Activated CD8-positive, alpha-beta T cell treated with anti-CD3 and anti-CD28 coated beads, Interleukin-2, amount 10 ng/mL, durations not matched to agents 7 days and 5 days (primary cell): ENCODE measurements at regions of chr19 and their contacts with region 1.

Region 1: DNA sequence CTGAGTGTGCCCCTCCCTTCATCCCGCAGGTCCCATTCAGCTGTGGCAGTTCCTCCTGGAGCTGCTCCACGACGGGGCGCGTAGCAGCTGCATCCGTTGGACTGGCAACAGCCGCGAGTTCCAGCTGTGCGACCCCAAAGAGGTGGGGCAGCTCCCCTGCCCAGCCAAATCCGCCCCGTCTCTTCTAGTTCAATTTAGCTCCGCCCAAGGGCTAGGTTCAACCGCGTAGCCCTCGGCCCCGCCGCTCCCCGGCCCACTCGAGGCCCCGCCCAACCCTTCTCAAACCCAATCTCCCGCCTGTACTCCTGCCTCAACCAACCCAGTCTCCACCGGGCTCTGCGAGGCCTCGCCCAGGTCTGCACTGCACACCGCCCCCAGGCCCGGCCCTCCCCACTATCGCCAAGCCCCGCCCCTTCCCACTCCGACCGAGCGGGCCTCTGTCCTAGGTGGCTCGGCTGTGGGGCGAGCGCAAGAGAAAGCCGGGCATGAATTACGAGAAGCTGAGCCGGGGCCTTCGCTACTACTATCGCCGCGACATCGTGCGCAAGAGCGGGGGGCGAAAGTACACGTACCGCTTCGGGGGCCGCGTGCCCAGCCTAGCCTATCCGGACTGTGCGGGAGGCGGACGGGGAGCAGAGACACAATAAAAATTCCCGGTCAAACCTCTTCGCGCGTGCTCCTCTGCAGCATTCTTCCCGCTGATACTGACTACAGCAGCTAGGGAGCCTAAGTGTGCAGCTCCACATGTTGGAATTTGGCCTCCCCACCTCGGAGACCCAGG is 2.9 kb downstream of the ETV2 start:
- DNase-seq: peak; percentile 99
- ATAC-seq: peak; percentile 86
- H3K4me3 Mint-ChIP-seq: peak overlapping the region; percentile 78
- H3K27ac Mint-ChIP-seq: peak overlapping the region; percentile 90
- H3K4me1 Mint-ChIP-seq: peaks cover 50% of the 10 kb centered on the region
- H3K27me3 Mint-ChIP-seq: no peaks in the 10 kb centered on the region

Region 2: DNA sequence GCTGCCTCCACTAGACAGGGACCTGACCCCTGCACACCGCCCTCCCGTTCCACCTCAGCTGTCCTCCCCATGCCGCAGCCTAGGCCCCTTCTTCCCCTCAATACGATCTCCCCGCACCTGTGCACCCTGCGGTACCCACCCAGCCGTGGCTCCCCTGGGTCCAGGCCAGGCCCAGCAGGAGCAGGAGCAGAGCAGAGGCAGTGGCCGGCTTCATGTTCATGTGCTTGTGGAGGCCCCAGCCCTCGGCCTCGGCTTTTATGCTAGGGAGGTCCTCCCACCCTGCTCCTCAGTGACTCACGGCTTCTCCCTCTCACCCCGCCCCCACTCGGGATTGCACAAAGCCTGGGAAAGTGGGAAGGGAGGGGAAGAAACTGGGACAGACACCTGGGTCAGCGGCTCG is 142.7 kb before region 1 on chr19:
- CTCF ChIA-PET with region 1: no interaction called
- POLR2A ChIA-PET with region 1: no interaction called
- DNase-seq: no peak
- ATAC-seq: no peak
- H3K4me3 Mint-ChIP-seq: no peak overlapping the region
- H3K27ac Mint-ChIP-seq: no peak overlapping the region
- H3K4me1 Mint-ChIP-seq: no peaks in the 10 kb centered on the region
- H3K27me3 Mint-ChIP-seq: peaks cover 12% of the 10 kb centered on the region

Region 3: DNA sequence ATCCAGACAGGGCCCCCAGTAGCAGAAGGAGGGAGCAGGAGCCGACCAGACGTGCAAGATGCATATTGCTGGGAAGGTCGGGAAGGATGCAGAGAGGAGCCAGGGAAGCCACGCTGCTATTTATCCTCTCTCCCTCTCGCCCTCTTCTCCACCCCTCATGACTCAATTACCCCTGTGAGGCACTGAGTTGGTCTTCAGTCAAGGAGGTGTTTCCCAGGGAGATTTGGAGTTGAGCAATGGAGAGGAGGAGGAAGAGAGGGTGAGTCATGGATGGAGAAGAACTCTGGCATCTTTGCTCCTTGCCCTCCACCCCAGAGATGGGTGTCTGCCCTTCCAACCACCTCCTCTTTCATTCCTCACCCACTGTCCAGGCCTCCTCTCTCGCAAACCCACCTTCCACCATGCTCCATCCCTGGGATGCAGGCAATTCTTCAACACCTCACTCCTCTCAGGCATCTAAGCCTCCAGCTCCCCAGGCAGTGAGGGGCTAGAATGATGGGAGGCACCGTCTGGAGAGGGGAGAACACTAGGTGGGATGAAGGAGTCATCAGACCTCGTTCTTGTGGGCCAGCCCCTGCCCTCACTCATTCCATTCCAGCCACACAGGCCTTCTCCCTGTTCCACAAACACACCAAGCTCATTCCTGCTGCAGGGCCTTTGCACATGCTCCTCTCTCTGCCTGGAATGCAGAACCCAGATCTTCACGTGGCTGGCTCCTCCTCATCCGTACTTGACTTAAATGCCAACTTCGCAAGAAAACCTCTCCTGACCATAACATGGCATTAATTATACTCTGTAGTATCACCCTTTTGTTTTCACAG is 116.0 kb before region 1 on chr19 and contains the start of gene SBSN:
- CTCF ChIA-PET with region 1: no interaction called
- POLR2A ChIA-PET with region 1: no interaction called
- DNase-seq: no peak
- ATAC-seq: no peak
- H3K4me3 Mint-ChIP-seq: no peak within 1 kb of the TSS
- H3K27ac Mint-ChIP-seq: no peak within 1 kb of the TSS
- H3K4me1 Mint-ChIP-seq: peaks cover 17% of the 10 kb centered on the region
- H3K27me3 Mint-ChIP-seq: peaks cover 26% of the 10 kb centered on the region
- total RNA-seq, gene SBSN: not detected

Region 4: DNA sequence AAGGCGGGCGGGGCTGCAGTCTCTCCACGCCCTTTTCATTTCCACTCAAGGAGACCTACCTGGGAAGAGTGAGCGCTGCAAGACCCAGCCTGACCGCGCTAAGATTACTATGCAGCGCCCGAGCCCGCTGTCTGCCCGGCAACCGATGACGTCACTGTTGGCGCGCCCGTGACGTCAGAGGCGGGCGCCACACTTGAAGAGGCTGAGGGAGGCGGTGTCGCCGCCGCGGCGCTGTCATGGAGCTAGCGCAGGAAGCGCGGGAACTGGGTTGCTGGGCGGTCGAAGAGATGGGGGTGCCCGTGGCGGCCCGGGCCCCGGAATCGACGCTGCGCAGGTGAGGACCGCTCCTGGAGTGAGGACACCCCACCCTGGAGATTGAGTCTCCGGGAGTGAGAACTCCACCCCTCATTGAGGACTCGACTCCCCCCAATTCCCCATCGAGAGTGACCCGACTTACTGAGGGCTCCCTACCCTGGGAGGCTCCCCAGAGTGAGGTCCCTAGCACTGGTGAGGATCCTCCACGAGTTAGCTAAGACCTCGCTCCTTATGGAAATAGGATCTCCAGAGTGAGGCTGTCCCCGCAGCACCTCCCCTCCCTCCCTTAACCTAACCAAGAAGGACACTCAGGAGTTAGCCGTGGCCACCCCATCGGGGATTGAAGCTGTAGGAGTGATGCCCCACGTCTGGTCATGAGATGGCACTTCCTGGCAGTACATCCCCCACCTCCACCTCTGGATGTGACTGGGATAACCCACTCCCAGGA is 31.7 kb before region 1 on chr19 and contains the start of gene HAUS5:
- CTCF ChIA-PET with region 1: interaction called, 3 read pairs
- POLR2A ChIA-PET with region 1: interaction called, 10 read pairs
- DNase-seq: peak; percentile 96
- ATAC-seq: peak; percentile 93
- H3K4me3 Mint-ChIP-seq: peak within 1 kb of the TSS; percentile 87
- H3K27ac Mint-ChIP-seq: peak within 1 kb of the TSS; percentile 95
- H3K4me1 Mint-ChIP-seq: peaks cover 46% of the 10 kb centered on the region
- H3K27me3 Mint-ChIP-seq: no peaks in the 10 kb centered on the region
- total RNA-seq, gene HAUS5: 53.3 to 62.3 TPM

Region 5: GRCh38 chr19:35629332-35629633 is 15.1 kb before region 1 on chr19:
- CTCF ChIA-PET with region 1: interaction called, 10 read pairs
- POLR2A ChIA-PET with region 1: interaction called, 7 read pairs
- DNase-seq: no peak
- ATAC-seq: no peak
- H3K4me3 Mint-ChIP-seq: peak overlapping the region; percentile 93
- H3K27ac Mint-ChIP-seq: peak overlapping the region; percentile 96
- H3K4me1 Mint-ChIP-seq: peaks cover 22% of the 10 kb centered on the region
- H3K27me3 Mint-ChIP-seq: no peaks in the 10 kb centered on the region

Region 6: DNA sequence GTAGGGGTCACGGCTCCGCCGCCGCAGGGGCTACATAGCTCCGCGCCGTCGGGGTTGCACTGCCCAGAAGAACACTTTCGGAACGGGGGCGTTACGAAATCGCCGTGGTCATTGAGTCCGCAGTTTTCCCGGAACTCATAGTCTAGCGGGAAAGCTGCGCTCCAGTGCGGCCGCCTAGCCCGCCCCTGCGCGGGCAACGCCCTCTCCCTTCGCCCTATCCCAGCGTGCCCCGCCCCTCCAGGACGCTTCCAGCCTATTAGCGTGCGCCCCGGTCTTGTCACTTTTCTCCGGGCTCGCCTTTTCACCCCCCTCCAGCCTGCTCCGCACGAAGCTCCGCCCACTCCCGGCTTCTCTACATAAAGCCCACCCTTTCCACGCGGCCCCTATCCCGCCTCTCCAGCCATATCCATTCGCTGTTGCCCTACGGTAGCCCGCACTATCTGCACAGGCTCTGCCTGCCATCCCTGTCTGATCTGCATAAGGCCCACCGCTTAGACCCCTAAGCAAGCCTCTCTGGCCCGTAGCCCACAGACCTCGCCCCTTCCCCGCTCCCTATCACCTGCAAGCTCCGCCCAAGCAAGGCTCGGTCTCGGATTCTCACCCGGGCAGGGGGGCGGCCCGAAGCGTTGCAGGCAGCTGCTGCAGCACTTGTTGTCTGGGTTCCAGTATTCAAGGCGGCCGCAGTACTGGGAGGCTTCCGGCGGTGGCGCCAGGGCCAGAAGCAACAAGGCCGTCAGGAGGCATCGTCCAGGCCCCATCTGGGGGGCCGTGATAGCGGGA is 96.2 kb after region 1 on chr19:
- CTCF ChIA-PET with region 1: no interaction called
- POLR2A ChIA-PET with region 1: no interaction called
- DNase-seq: peak; percentile 99
- ATAC-seq: peak; percentile 74
- H3K4me3 Mint-ChIP-seq: peak overlapping the region; percentile 90
- H3K27ac Mint-ChIP-seq: peak overlapping the region; percentile 92
- H3K4me1 Mint-ChIP-seq: peaks cover 50% of the 10 kb centered on the region
- H3K27me3 Mint-ChIP-seq: no peaks in the 10 kb centered on the region